ENCODE measurements at regions of chr5 and their contacts with region 1.

Region 1: GRCh38 chr5:159331093-159331973 is 1.0 kb upstream of the IL12B start:
- DNase-seq: peak; percentile 72
- ATAC-seq: peak; percentile 48
- H3K4me3 Mint-ChIP-seq: peak overlapping the region; percentile 80
- H3K27ac Mint-ChIP-seq: peak overlapping the region; percentile 90
- H3K4me1 Mint-ChIP-seq: peaks cover 61% of the 10 kb centered on the region
- H3K27me3 Mint-ChIP-seq: no peaks in the 10 kb centered on the region
- CTCF ChIP-seq: no peak

Region 2: GRCh38 chr5:159262859-159263567 is 68.3 kb before region 1 on chr5 and contains the start of gene UBLCP1:
- CTCF ChIA-PET with region 1: no interaction called
- POLR2A ChIA-PET with region 1: no interaction called
- intact Hi-C with region 1: loop called (anchors 1 kb)
- DNase-seq: peak; percentile 78
- ATAC-seq: peak; percentile 83
- H3K4me3 Mint-ChIP-seq: peak within 1 kb of the TSS; percentile 99
- H3K27ac Mint-ChIP-seq: peak within 1 kb of the TSS; percentile 99
- H3K4me1 Mint-ChIP-seq: peaks cover 39% of the 10 kb centered on the region
- H3K27me3 Mint-ChIP-seq: no peaks in the 10 kb centered on the region
- CTCF ChIP-seq: no peak
- total RNA-seq, gene UBLCP1: 40.3 and 44.8 TPM in 2 replicates

Region 3: GRCh38 chr5:159345336-159345735 is 14.0 kb after region 1 on chr5:
- CTCF ChIA-PET with region 1: interaction called, 3 read pairs
- POLR2A ChIA-PET with region 1: interaction called, 4 read pairs
- intact Hi-C with region 1: loop called (anchors 2 kb)
- DNase-seq: no peak
- ATAC-seq: no peak
- H3K4me3 Mint-ChIP-seq: no peak overlapping the region
- H3K27ac Mint-ChIP-seq: peak overlapping the region; percentile 18
- H3K4me1 Mint-ChIP-seq: peaks cover 68% of the 10 kb centered on the region
- H3K27me3 Mint-ChIP-seq: no peaks in the 10 kb centered on the region
- CTCF ChIP-seq: no peak

Region 4: GRCh38 chr5:159427180-159428012 is 96.1 kb after region 1 on chr5:
- CTCF ChIA-PET with region 1: interaction called, 3 read pairs
- POLR2A ChIA-PET with region 1: interaction called, 16 read pairs
- intact Hi-C with region 1: loop called (anchors 1 kb)
- DNase-seq: no peak
- ATAC-seq: peak; percentile 81
- H3K4me3 Mint-ChIP-seq: peak overlapping the region; percentile 76
- H3K27ac Mint-ChIP-seq: peak overlapping the region; percentile 96
- H3K4me1 Mint-ChIP-seq: peaks cover 64% of the 10 kb centered on the region
- H3K27me3 Mint-ChIP-seq: no peaks in the 10 kb centered on the region
- CTCF ChIP-seq: no peak

Region 5: DNA sequence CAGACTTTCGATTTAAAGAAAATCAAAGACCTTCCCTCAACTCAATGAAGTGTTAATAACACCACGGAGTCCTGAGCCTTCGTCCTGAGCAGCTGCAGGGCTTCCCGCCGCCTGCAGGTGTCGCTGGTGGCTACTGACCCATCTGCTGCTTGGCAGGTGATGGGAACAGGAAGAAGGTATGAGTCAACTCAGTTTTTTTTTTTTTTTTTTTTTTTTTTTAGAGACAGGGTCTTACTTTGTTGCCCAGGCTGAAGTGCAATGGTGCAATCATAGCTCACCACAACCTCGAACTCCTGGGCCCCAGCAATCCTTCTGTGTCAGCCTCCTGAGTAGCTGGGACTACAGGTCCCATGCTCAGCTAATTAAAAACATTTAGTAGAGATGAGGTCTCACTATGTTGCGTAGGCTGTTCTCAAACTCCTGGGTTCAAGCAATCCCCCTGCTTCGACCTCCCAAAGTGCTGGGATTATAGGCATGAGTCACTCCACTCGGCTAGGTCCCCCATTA is 184.6 kb after region 1 on chr5:
- CTCF ChIA-PET with region 1: no interaction called
- POLR2A ChIA-PET with region 1: interaction called, 3 read pairs
- intact Hi-C with region 1: loop called (anchors 2 kb)
- DNase-seq: peak; percentile 58
- ATAC-seq: peak; percentile 99
- H3K4me3 Mint-ChIP-seq: no peak overlapping the region
- H3K27ac Mint-ChIP-seq: no peak overlapping the region
- H3K4me1 Mint-ChIP-seq: peaks cover 7% of the 10 kb centered on the region
- H3K27me3 Mint-ChIP-seq: no peaks in the 10 kb centered on the region
- CTCF ChIP-seq: peak; percentile 19

Region 6: GRCh38 chr5:159965031-159965837 is 633.9 kb after region 1 on chr5:
- CTCF ChIA-PET with region 1: no interaction called
- POLR2A ChIA-PET with region 1: no interaction called
- intact Hi-C with region 1: loop called (anchors 1 kb)
- DNase-seq: no peak
- ATAC-seq: no peak
- H3K4me3 Mint-ChIP-seq: no peak overlapping the region
- H3K27ac Mint-ChIP-seq: no peak overlapping the region
- H3K4me1 Mint-ChIP-seq: no peaks in the 10 kb centered on the region
- H3K27me3 Mint-ChIP-seq: peaks cover 42% of the 10 kb centered on the region
- CTCF ChIP-seq: no peak

Region 7: GRCh38 chr5:160119142-160119904 is 788.0 kb after region 1 on chr5 and contains the start of gene PWWP2A:
- CTCF ChIA-PET with region 1: no interaction called
- POLR2A ChIA-PET with region 1: no interaction called
- intact Hi-C with region 1: loop called (anchors 5 kb)
- DNase-seq: peak; percentile 81
- ATAC-seq: peak; percentile 92
- H3K4me3 Mint-ChIP-seq: peak within 1 kb of the TSS; percentile 95
- H3K27ac Mint-ChIP-seq: peak within 1 kb of the TSS; percentile 92
- H3K4me1 Mint-ChIP-seq: peaks cover 17% of the 10 kb centered on the region
- H3K27me3 Mint-ChIP-seq: peaks cover 6% of the 10 kb centered on the region
- CTCF ChIP-seq: no peak
- total RNA-seq, gene PWWP2A: 25.8 and 33.0 TPM in 2 replicates

Measured in activated B cell treated with CpG ODN at 0.5 μM for 24 hours (primary cell).